Left ventricle myocardium inferior (tissue), 1 donor: ENCODE measurements at regions of chr11 and their contacts with region 1.

Region 1: GRCh38 chr11:130434521-130435223 is 6.3 kb upstream of the ADAMTS8 start:
- DNase-seq: peak; percentile 68
- H3K4me3 ChIP-seq: peak overlapping the region; percentile 74
- H3K27ac ChIP-seq: peak overlapping the region; percentile 81
- H3K4me1 ChIP-seq: peaks cover 16% of the 10 kb centered on the region
- H3K27me3 ChIP-seq: peaks cover 13% of the 10 kb centered on the region
- CTCF ChIP-seq: peak; percentile 78

Region 2: DNA sequence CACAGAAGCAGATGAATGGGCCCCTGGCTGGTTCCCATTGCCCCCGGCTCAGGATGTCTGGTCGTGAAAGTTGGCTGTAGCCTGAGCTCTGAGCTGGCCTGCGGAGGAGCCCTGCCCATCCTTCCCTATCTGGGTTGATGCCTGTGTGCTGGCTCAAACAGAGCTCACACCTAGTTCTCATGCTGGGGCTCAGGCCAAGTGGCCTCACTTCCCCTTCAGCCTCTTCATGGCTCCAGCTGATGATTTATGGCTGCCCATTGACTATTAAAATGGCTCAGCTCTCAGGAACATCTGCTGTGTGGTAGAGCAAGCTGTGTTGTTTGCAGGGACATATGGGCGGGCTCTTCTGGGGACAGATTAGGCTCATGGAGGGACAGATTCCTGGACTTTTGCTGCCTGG is 78.5 kb after region 1 on chr11:
- intact Hi-C with region 1: no loop called
- DNase-seq: peak; percentile 75
- H3K4me3 ChIP-seq: no peak overlapping the region
- H3K27ac ChIP-seq: peak overlapping the region; percentile 77
- H3K4me1 ChIP-seq: peaks cover 55% of the 10 kb centered on the region
- H3K27me3 ChIP-seq: no peaks in the 10 kb centered on the region
- CTCF ChIP-seq: no peak

Region 3: GRCh38 chr11:130737866-130738431 is 303.3 kb after region 1 on chr11:
- intact Hi-C with region 1: loop called (anchors 10 kb)
- DNase-seq: peak; percentile 78
- H3K4me3 ChIP-seq: peak overlapping the region; percentile 34
- H3K27ac ChIP-seq: peak overlapping the region; percentile 78
- H3K4me1 ChIP-seq: peaks cover 23% of the 10 kb centered on the region
- H3K27me3 ChIP-seq: no peaks in the 10 kb centered on the region
- CTCF ChIP-seq: no peak

Region 4: DNA sequence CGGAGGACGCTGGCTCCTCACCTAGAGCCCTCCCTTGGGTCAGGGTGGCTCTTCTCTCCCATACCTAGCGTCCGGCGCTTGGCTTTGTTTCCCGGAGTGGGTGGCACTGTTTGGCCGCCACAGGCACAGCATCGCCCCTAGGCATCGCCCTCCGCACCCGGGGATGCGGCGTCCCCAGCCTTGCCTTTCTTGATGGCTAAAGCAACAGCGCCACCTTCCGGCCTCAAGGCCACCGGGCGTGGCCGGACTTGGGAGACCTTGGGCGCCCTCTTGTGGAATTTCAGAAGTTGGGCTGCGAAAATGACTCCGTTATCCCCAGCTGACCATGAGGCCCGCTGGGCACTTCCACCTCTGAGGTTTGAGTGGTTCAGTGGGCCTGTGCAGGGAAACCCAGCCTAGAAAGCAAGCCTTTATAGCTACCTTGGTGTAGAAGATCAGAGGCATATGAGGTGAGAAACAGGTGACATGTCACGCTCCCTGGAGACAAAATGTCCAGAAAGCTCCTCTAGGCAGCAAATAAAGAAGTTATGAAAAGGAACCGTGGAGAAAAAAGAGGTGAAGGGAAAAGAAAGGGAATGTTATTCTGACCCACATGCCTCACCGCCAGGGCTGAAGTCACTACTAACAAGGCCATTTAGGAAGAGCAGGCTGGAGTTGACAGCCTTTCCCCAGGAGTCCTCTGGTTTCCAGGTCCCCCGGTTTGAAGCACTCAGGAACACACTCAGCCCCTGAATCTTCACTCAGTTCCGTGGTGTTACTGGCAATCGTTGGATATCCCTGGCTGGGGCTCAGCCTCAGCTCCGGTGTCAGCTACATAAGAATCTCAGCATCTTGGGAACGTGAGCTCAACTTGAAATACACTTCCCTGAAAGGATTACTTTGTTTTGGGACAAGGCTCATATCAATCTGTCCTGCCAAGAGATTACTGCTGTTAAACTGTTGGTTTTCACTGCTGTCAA is 427.5 kb after region 1 on chr11:
- intact Hi-C with region 1: loop called (anchors 1 kb)
- DNase-seq: peak; percentile 89
- H3K4me3 ChIP-seq: peak overlapping the region; percentile 28
- H3K27ac ChIP-seq: no peak overlapping the region
- H3K4me1 ChIP-seq: peaks cover 36% of the 10 kb centered on the region
- H3K27me3 ChIP-seq: no peaks in the 10 kb centered on the region
- CTCF ChIP-seq: peak; percentile 100

Region 5: DNA sequence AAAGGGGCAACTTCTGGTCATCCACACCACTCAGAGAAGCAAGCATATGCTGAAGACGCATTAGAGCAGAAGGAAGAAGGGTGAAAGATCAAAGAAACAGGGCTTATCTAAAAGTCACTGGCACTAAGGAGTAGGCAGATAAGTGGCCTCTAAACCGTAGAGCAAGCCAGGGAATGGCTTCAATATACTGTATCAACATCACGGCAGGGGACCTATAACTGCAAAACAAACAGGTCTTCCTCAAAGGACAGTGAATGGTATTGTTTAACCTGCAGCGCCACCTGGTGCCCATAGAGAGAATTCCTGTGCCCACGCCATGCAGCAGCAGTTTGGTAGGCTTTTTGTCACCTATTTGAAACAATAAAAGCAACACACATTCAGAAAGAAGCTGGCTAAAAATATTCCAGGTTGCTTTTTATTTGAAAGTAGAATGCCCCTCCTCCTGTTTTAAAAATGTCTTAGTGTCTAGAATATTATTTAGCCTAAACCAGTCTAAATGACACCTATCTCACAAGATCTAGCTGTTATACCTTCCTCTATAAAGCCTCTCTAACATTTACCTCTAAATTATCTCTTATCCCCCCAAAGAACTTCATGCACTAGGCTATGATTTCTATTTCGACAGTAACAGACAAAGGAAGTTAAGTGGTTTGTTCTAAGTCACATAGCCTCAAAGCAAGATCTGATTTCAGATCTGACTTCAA is 459.8 kb after region 1 on chr11:
- intact Hi-C with region 1: loop called (anchors 10 kb)
- DNase-seq: peak; percentile 65
- H3K4me3 ChIP-seq: no peak overlapping the region
- H3K27ac ChIP-seq: peak overlapping the region; percentile 91
- H3K4me1 ChIP-seq: peaks cover 88% of the 10 kb centered on the region
- H3K27me3 ChIP-seq: no peaks in the 10 kb centered on the region
- CTCF ChIP-seq: peak; percentile 93